ENCODE measurements at regions of chr12 and their contacts with region 1.

Region 1: DNA sequence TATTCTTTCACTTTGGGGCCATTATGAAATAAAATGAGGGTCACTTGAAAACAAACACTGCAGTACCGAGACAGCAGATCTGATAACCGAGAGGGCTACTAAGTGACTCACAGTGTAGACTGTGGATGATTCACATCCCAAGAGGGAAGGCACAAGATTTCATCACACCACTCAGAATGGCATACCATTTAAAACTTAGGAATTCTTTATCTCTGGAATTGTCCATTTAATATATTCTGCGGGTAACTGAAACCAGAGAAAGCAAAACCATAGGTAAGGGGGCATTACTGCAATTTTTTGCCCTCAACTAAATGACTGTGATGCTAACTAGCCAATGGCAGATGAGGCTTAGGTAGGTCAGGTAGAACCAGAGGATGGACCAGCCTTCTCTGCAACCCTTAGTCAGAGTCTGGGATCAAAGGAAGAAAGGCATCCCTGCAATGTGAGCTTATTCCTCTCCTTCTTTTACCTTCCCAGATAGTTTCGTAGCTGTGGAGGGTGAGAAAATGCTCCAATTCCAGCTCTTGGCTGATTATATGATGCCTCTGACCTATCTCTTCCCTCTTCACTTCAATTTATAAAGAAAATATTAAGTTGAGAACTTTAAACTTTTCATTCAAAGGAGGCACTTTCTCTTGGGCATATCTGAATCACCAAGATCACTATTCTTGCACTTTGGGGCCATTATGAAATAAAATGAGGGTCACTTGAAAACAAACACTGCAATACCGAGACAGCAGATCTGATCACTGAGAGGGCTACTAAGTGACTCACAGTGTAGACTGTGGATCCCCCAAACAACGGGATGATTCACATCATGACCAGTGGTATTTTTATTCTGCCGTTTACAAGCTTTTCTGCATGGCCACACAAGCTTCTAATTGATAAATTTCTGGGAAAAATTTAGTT is 6.8 kb downstream of the ART4 start:
- DNase-seq: no peak
- ATAC-seq: peak; percentile 62

Region 2: DNA sequence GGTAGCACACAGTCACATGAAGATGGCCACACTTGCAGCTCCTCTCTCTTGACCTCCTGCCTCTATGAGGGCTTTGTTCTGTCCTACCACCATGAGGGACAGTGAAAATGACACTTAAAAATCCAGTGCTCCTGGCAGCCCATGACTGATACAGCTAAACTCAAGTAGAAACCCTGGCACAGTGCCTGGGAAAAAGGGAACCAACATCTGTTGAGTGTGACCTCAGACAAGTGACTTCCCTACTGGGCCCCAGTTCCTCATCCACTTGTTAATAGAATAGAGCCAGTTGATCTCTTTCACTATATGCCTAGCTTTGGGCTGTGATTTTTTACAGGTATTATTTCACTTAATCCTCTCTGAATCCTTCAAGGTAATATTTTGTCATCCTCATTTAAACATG is 145.0 kb before region 1 on chr12:
- intact Hi-C with region 1: no loop called
- DNase-seq: peak; percentile 54
- ATAC-seq: peak; percentile 97

Region 3: DNA sequence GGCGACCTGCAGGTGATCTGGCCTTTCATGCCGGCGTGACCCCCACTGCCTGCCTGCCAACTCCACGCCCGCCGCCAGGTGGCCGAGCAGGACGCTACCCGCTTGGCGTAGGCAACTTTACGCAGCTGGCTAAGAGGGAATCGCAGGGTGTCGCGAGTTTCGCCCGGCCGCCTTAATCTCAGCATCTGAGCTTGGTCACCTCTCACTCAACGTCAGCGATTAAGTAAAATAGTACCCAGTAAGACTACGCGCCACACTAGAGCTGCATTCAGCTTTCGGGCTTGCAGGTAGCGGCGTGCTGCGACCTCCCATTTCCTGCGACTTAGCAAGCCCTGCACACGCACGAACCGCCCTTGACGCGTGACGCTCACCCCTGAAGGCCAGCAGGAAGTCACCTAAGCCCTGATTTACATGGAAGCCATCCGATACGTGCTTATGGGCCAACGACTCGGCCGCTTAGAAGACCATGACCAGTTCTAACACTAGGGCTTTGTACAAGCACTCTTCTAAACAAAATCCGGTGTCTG is 66.5 kb before region 1 on chr12:
- intact Hi-C with region 1: loop called (anchors 10 kb)
- DNase-seq: peak; percentile 88
- ATAC-seq: peak; percentile 74